ENCODE measurements at regions of chr1 and their contacts with region 1.

Region 1: GRCh38 chr1:213987927-213988506 is at the start of gene PROX1:
- DNase-seq: peak in 4 of 10 donors; percentile 46 to 94 (median 72)

Region 2: GRCh38 chr1:213135572-213135971 is 852.4 kb before region 1 on chr1:
- intact Hi-C with region 1: loop called (anchors 10 kb)
- DNase-seq: no peak

Measured in posterior cingulate gyrus (tissue), 11 donors.